Heart right ventricle (tissue), 16 donors: ENCODE measurements at regions of chr9 and their contacts with region 1.

Region 1: GRCh38 chr9:68704814-68705530 is at the start of gene PIP5K1B:
- DNase-seq: peak; percentile 66 to 76
- ATAC-seq: peak; percentile 82 to 92 (median 86)
- H3K4me3 ChIP-seq: peak within 1 kb of the TSS; percentile 29 to 79 (median 64)
- H3K27ac ChIP-seq: peak within 1 kb of the TSS; percentile 81 to 93 (median 88)
- H3K4me1 ChIP-seq: peaks cover 0 to 32% (median 8%) of the 10 kb centered on the region in 9 donors
- H3K27me3 ChIP-seq: peaks cover 0 to 50% (median 14%) of the 10 kb centered on the region in 7 donors
- CTCF ChIP-seq: peak in 3 of 9 donors; percentile 7 to 36 (median 13)
- total RNA-seq, gene PIP5K1B: 32.2 to 90.8 (median 49.7) TPM

Region 2: DNA sequence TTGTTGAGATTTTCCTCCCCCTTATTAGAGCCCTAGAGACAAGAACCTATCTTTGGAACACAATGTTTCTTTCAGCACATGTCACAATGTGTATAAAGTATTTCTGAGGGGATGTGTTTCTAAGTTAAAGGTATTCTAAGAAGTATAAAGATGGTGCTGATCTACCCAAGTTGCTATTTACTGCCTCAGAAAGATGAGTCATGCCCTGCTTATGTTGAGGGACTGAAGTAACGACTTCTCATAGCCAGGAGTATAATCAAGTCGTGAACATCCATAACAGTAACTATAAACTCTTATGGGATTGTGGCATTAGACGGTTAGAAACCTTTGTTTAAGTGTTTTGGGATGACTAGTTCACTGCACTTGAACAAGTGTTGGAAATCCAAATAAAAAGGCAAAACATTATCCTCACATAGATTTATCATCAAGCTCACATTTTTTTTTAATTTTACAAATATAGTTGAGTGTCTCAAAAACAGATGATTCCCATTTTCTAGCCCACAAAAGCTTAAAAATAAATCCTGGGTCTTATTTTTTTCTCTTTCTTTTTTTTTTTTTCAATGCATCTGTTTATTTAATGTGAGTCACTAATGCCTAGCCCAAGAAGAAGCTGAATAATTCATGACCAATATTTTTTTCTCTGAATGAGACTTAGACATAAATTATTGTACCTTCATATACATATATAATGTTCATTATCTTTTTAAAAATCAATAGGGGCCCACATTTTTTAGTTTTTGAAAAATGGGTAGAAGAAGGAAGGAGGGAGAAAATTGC is 152.1 kb before region 1 on chr9:
- intact Hi-C with region 1: no loop called
- DNase-seq: no peak
- ATAC-seq: peak in 3 of 8 donors; percentile 28 to 53 (median 39)
- H3K4me3 ChIP-seq: no peak overlapping the region
- H3K27ac ChIP-seq: no peak overlapping the region
- H3K4me1 ChIP-seq: peaks cover 0 to 16% (median 0%) of the 10 kb centered on the region in 9 donors
- H3K27me3 ChIP-seq: no peaks in the 10 kb centered on the region
- CTCF ChIP-seq: no peak

Region 3: DNA sequence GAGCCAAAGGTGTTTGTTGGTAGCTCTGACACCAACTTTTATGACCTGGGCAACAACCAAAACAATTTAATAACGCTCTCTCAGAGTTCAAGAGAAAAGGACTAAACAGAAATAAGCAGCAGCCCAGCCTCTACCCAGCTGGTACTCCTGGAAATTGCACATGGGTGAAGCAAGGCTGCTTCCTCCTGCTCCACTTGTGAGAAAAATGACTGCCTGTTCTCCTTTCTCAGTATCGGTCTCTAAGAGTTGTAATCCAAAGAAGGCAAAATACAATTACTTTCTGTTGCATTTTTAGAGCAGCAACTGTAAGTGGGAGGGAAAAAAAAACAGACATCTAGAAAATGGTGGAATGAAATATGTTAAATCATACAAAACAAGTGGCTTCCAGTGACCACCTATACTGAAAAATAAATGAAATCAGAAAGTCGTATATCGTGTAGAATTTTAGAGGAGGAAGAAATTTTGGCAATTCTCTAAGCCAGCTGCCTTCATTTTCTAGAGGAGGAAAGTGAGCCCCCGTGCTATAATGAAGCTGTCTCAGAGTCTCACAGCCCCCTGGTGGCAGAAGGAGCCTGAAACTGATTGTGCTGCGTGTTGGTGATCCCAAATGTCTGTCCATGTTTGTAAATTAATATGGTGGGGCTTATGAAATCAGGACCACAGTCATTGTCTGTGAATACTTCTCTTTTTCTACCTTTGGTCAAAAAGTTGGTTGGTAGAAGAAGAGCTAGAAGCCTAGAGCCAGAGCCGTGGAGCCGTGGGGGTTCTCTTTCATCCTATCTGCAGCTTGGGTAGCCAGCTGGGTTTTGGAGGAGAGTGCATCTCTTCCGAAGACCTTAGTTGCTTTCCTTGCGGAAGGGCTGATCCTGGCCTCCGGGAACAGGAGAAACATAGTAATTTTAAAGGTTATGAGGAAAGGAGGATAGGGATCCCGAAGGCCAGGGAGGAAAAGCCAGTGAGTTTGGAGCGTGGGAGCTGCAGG is 139.9 kb after region 1 on chr9:
- intact Hi-C with region 1: loop called in 4 of 10 experiments (anchors 5 to 10 kb)
- DNase-seq: peak; percentile 32 to 53
- ATAC-seq: peak in 7 of 8 donors; percentile 45 to 67 (median 55)
- H3K4me3 ChIP-seq: peak overlapping the region in 1 of 10 donors; percentile 28
- H3K27ac ChIP-seq: peak overlapping the region in 2 of 10 donors; percentile 15 to 68
- H3K4me1 ChIP-seq: peaks cover 0 to 46% (median 16%) of the 10 kb centered on the region in 9 donors
- H3K27me3 ChIP-seq: no peaks in the 10 kb centered on the region
- CTCF ChIP-seq: peak in 8 of 9 donors; percentile 40 to 67 (median 58)

Region 4: GRCh38 chr9:68872026-68872501 is 167.1 kb after region 1 on chr9:
- intact Hi-C with region 1: loop called in 1 of 10 experiments (anchors 10 kb)
- DNase-seq: peak; percentile 48 to 56
- ATAC-seq: peak; percentile 76 to 96 (median 86)
- H3K4me3 ChIP-seq: no peak overlapping the region
- H3K27ac ChIP-seq: peak overlapping the region; percentile 28 to 86 (median 74)
- H3K4me1 ChIP-seq: peaks cover 0 to 50% (median 23%) of the 10 kb centered on the region in 9 donors
- H3K27me3 ChIP-seq: no peaks in the 10 kb centered on the region
- CTCF ChIP-seq: no peak

Region 5: GRCh38 chr9:68949271-68950000 is 244.5 kb after region 1 on chr9:
- intact Hi-C with region 1: loop called in 3 of 10 experiments (anchors 5 to 10 kb)
- DNase-seq: peak in 1 of 2 donors; percentile 23
- ATAC-seq: peak in 4 of 8 donors; percentile 30 to 41 (median 38)
- H3K4me3 ChIP-seq: no peak overlapping the region
- H3K27ac ChIP-seq: peak overlapping the region in 2 of 10 donors; percentile 12 to 36
- H3K4me1 ChIP-seq: peaks cover 0 to 15% (median 0%) of the 10 kb centered on the region in 9 donors
- H3K27me3 ChIP-seq: no peaks in the 10 kb centered on the region
- CTCF ChIP-seq: peak in 6 of 9 donors; percentile 11 to 39 (median 19)